Activated CD8-positive, alpha-beta T cell treated with anti-CD3 and anti-CD28 coated beads for 36 hours (primary cell): ENCODE measurements at regions of chr14 and their contacts with region 1.

Region 1: DNA sequence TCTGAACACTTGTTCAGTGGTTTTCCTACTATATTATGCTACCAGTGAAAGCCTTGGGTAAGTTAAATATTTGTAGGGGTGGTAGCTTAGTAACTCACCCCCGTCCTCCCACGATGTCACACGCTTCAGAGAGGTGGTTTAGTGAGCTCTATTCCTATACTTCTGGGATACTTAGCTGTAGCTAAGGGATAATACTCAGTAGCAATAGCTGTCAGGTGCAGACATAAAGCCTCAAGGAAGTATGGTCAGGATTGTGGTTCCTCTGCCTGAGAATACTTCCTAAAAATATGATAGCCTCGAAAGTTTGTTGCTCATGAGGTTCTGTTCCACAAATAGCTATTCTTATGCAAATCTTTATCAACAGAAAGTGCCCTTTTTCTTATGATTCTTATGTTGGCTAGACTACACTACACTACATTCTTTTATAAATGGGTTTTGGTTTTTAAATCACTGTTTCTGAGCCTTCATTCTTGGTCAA is 11.9 kb downstream of the DLST start:
- DNase-seq: no peak
- ATAC-seq: no peak
- H3K4me3 Mint-ChIP-seq: no peak overlapping the region
- H3K27ac Mint-ChIP-seq: peak overlapping the region; percentile 34
- H3K4me1 Mint-ChIP-seq: no peaks in the 10 kb centered on the region
- H3K27me3 Mint-ChIP-seq: no peaks in the 10 kb centered on the region
- CTCF ChIP-seq: no peak

Region 2: GRCh38 chr14:74881431-74882361 is 12.0 kb before region 1 on chr14 and contains the start of gene DLST:
- CTCF ChIA-PET with region 1: interaction called, 11 read pairs
- POLR2A ChIA-PET with region 1: interaction called, 10 read pairs
- intact Hi-C with region 1: no loop called
- DNase-seq: peak; percentile 88
- ATAC-seq: peak; percentile 92
- H3K4me3 Mint-ChIP-seq: peak within 1 kb of the TSS; percentile 96
- H3K27ac Mint-ChIP-seq: peak within 1 kb of the TSS; percentile 91
- H3K4me1 Mint-ChIP-seq: peaks cover 58% of the 10 kb centered on the region
- H3K27me3 Mint-ChIP-seq: no peaks in the 10 kb centered on the region
- CTCF ChIP-seq: no peak
- total RNA-seq, gene DLST: 110 to 113 TPM